CD4-positive, alpha-beta memory T cell (primary cell): ENCODE measurements at regions of chrX and their contacts with region 1.

Region 1: DNA sequence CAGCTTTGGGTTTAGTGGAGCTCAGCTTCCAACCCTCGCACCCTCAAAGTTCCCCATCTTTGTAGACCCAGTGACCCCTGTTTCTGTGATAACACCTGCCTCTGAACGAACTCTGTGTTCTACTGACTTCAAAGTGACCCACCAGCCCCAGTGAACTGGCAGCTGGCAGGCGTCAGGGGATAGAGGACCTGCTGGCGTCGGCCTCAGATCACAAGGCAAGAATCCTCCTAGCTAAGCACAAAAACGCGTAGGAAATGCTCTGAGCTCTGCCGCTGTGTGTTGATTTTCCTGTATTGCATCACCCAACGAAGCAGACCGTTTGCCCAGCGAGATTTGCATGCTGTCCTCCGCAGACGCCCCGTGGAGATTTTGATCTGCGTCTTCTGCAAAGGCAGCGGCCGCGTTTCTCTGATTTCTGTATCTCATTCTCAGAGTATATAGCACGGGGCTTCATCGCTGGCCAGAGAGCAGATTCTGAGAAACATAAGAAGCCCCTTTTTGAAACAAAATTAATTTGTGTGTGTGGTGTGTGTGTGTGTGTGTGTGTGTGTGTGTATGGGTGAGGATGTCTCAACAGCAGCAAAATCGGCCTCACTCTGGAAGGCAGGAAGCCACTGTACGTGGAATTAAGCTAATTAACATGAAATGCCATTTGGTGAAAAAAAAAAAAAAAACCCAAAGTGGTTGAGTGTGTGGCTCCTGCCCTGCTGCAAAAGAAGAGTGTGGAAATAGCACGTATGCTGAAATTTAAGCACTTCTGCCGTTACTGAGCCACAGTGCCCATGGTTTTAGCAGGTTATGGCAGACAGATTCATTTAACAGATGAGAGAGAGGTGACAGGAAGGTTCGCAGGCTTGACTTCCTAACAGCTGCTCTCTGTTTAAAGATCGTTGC is 29.2 kb upstream of the ASMTL start:
- DNase-seq: peak; percentile 80 to 88 (median 82)
- H3K4me3 ChIP-seq: peak overlapping the region in 1 of 2 donors; percentile 27
- H3K4me3 Mint-ChIP-seq: peak overlapping the region; percentile 66 to 93 (median 82)
- H3K27ac ChIP-seq: peak overlapping the region; percentile 63
- H3K27ac Mint-ChIP-seq: peak overlapping the region; percentile 90 to 99 (median 95)
- H3K4me1 ChIP-seq: peaks cover 71% of the 10 kb centered on the region
- H3K4me1 Mint-ChIP-seq: peaks cover 46 to 78% (median 56%) of the 10 kb centered on the region in 4 donors
- H3K27me3 ChIP-seq: no peaks in the 10 kb centered on the region
- H3K27me3 Mint-ChIP-seq: no peaks in the 10 kb centered on the region

Region 2: GRCh38 chrX:1368385-1368698 is 113.5 kb before region 1 on chrX:
- CTCF ChIA-PET with region 1: no interaction called
- POLR2A ChIA-PET with region 1: no interaction called
- intact Hi-C with region 1: no loop called
- DNase-seq: no peak
- H3K4me3 ChIP-seq: no peak overlapping the region
- H3K4me3 Mint-ChIP-seq: no peak overlapping the region
- H3K27ac ChIP-seq: no peak overlapping the region
- H3K27ac Mint-ChIP-seq: peak overlapping the region in 2 of 7 donors; percentile 50 to 52
- H3K4me1 ChIP-seq: no peaks in the 10 kb centered on the region
- H3K4me1 Mint-ChIP-seq: no peaks in the 10 kb centered on the region
- H3K27me3 ChIP-seq: no peaks in the 10 kb centered on the region
- H3K27me3 Mint-ChIP-seq: no peaks in the 10 kb centered on the region

Region 3: GRCh38 chrX:1420371-1420770 is 61.5 kb before region 1 on chrX:
- CTCF ChIA-PET with region 1: no interaction called
- POLR2A ChIA-PET with region 1: no interaction called
- intact Hi-C with region 1: no loop called
- DNase-seq: no peak
- H3K4me3 ChIP-seq: no peak overlapping the region
- H3K4me3 Mint-ChIP-seq: no peak overlapping the region
- H3K27ac ChIP-seq: no peak overlapping the region
- H3K27ac Mint-ChIP-seq: peak overlapping the region in 3 of 7 donors; percentile 4 to 84 (median 62)
- H3K4me1 ChIP-seq: no peaks in the 10 kb centered on the region
- H3K4me1 Mint-ChIP-seq: peaks cover 0 to 9% (median 2%) of the 10 kb centered on the region in 4 donors
- H3K27me3 ChIP-seq: no peaks in the 10 kb centered on the region
- H3K27me3 Mint-ChIP-seq: no peaks in the 10 kb centered on the region

Region 4: GRCh38 chrX:1462596-1463251 is 19.2 kb before region 1 on chrX:
- CTCF ChIA-PET with region 1: no interaction called
- POLR2A ChIA-PET with region 1: no interaction called
- intact Hi-C with region 1: loop called (anchors 2 kb)
- DNase-seq: peak; percentile 87 to 95 (median 93)
- H3K4me3 ChIP-seq: no peak overlapping the region
- H3K4me3 Mint-ChIP-seq: peak overlapping the region; percentile 30 to 82 (median 60)
- H3K27ac ChIP-seq: peak overlapping the region; percentile 76
- H3K27ac Mint-ChIP-seq: peak overlapping the region; percentile 95 to 99 (median 98)
- H3K4me1 ChIP-seq: peaks cover 62% of the 10 kb centered on the region
- H3K4me1 Mint-ChIP-seq: peaks cover 37 to 61% (median 51%) of the 10 kb centered on the region in 4 donors
- H3K27me3 ChIP-seq: no peaks in the 10 kb centered on the region
- H3K27me3 Mint-ChIP-seq: no peaks in the 10 kb centered on the region

Region 5: GRCh38 chrX:1468250-1468772 is 13.6 kb before region 1 on chrX:
- CTCF ChIA-PET with region 1: no interaction called
- POLR2A ChIA-PET with region 1: no interaction called
- intact Hi-C with region 1: loop called (anchors 1 kb)
- DNase-seq: peak; percentile 75 to 94 (median 76)
- H3K4me3 ChIP-seq: no peak overlapping the region
- H3K4me3 Mint-ChIP-seq: peak overlapping the region; percentile 54 to 84 (median 75)
- H3K27ac ChIP-seq: peak overlapping the region; percentile 81
- H3K27ac Mint-ChIP-seq: peak overlapping the region; percentile 94 to 99 (median 96)
- H3K4me1 ChIP-seq: peaks cover 95% of the 10 kb centered on the region
- H3K4me1 Mint-ChIP-seq: peaks cover 55 to 89% (median 73%) of the 10 kb centered on the region in 4 donors
- H3K27me3 ChIP-seq: no peaks in the 10 kb centered on the region
- H3K27me3 Mint-ChIP-seq: no peaks in the 10 kb centered on the region

Region 6: DNA sequence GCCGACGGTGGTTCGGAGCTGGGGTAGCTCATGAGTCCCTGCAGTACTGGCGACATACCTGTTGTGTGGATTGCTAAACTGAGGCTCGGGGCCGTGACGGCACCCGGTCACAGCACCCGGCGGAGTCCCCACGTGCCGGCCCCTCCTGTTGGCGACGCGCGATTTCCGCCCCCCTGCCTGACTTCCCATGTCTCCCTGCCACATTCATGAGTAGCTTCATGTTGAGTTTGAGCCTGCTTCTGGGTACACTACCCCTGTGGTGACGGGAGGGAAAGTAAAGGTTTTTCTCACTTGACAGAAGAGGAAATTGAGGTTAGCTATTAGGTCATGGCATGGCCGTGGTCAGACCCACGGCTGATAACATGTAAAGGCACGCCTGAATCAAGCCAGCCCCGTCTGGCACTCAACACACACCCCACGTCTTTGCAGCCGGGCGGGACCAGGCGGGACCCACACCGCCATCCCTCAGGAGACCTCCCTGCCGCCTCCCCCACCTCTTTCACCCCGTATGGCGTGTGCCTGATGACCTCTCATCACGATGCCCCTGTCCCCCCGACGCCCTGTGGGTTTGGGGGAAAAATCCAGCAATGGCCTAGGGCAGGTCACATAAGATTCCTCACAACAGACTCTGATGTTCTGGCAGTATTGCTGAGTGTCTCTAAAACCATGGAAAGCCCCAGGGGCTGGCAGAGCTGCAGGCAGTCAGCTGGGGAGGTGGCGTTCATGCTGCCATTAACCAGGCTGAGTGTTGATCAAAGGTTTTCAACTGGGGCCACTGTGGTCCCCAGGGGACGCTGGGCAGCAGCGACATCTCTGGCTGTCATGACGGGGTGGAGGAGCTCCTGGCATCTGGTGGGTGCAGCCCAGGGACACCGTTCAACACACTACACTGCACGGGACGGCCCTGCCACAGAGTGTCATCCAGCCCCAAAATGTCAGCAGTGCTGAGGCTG is 25.9 kb after region 1 on chrX:
- CTCF ChIA-PET with region 1: no interaction called
- POLR2A ChIA-PET with region 1: no interaction called
- intact Hi-C with region 1: no loop called
- DNase-seq: peak in 4 of 5 donors; percentile 32 to 76 (median 47)
- H3K4me3 ChIP-seq: no peak overlapping the region
- H3K4me3 Mint-ChIP-seq: peak overlapping the region in 4 of 8 donors; percentile 15 to 71 (median 36)
- H3K27ac ChIP-seq: peak overlapping the region; percentile 31
- H3K27ac Mint-ChIP-seq: peak overlapping the region in 4 of 7 donors; percentile 6 to 91 (median 86)
- H3K4me1 ChIP-seq: peaks cover 45% of the 10 kb centered on the region
- H3K4me1 Mint-ChIP-seq: peaks cover 28 to 38% (median 33%) of the 10 kb centered on the region in 4 donors
- H3K27me3 ChIP-seq: no peaks in the 10 kb centered on the region
- H3K27me3 Mint-ChIP-seq: no peaks in the 10 kb centered on the region